ENCODE measurements at regions of chr15 and their contacts with region 1.

Region 1: GRCh38 chr15:48520376-48521155 is 124.9 kb downstream of the FBN1 start:
- DNase-seq: peak; percentile 68
- ATAC-seq: peak; percentile 99
- H3K4me3 Mint-ChIP-seq: no peak overlapping the region
- H3K27ac Mint-ChIP-seq: no peak overlapping the region
- H3K4me1 Mint-ChIP-seq: peaks cover 5% of the 10 kb centered on the region
- H3K27me3 Mint-ChIP-seq: no peaks in the 10 kb centered on the region
- CTCF ChIP-seq: no peak

Region 2: GRCh38 chr15:48358229-48358641 is 162.3 kb before region 1 on chr15:
- CTCF ChIA-PET with region 1: interaction called, 31 read pairs
- POLR2A ChIA-PET with region 1: no interaction called
- DNase-seq: no peak
- ATAC-seq: no peak
- H3K4me3 Mint-ChIP-seq: no peak overlapping the region
- H3K27ac Mint-ChIP-seq: no peak overlapping the region
- H3K4me1 Mint-ChIP-seq: peaks cover 10% of the 10 kb centered on the region
- H3K27me3 Mint-ChIP-seq: no peaks in the 10 kb centered on the region
- CTCF ChIP-seq: 0 out of 2 replicates have a peak, but pooled peaks have one; percentile 31

Region 3: GRCh38 chr15:48406913-48407312 is 113.7 kb before region 1 on chr15:
- CTCF ChIA-PET with region 1: interaction called, 10 read pairs
- POLR2A ChIA-PET with region 1: no interaction called
- DNase-seq: peak; percentile 28
- ATAC-seq: peak; percentile 61
- H3K4me3 Mint-ChIP-seq: no peak overlapping the region
- H3K27ac Mint-ChIP-seq: no peak overlapping the region
- H3K4me1 Mint-ChIP-seq: no peaks in the 10 kb centered on the region
- H3K27me3 Mint-ChIP-seq: no peaks in the 10 kb centered on the region
- CTCF ChIP-seq: no peak

Measured in WTC11 (cell line).